Mammary epithelial cell (primary cell): ENCODE measurements at regions of chr20 and their contacts with region 1.

Region 1: GRCh38 chr20:53828682-53829254 is 235.1 kb upstream of the ZNF217 start:
- DNase-seq: peak; percentile 84
- H3K4me3 ChIP-seq: peak overlapping the region; percentile 10 to 40 (median 35)
- H3K27ac ChIP-seq: peak overlapping the region; percentile 100
- H3K4me1 ChIP-seq: peaks cover 36% of the 10 kb centered on the region
- H3K27me3 ChIP-seq: no peaks in the 10 kb centered on the region
- CTCF ChIP-seq: peak in 1 of 2 donors; percentile 14

Region 2: DNA sequence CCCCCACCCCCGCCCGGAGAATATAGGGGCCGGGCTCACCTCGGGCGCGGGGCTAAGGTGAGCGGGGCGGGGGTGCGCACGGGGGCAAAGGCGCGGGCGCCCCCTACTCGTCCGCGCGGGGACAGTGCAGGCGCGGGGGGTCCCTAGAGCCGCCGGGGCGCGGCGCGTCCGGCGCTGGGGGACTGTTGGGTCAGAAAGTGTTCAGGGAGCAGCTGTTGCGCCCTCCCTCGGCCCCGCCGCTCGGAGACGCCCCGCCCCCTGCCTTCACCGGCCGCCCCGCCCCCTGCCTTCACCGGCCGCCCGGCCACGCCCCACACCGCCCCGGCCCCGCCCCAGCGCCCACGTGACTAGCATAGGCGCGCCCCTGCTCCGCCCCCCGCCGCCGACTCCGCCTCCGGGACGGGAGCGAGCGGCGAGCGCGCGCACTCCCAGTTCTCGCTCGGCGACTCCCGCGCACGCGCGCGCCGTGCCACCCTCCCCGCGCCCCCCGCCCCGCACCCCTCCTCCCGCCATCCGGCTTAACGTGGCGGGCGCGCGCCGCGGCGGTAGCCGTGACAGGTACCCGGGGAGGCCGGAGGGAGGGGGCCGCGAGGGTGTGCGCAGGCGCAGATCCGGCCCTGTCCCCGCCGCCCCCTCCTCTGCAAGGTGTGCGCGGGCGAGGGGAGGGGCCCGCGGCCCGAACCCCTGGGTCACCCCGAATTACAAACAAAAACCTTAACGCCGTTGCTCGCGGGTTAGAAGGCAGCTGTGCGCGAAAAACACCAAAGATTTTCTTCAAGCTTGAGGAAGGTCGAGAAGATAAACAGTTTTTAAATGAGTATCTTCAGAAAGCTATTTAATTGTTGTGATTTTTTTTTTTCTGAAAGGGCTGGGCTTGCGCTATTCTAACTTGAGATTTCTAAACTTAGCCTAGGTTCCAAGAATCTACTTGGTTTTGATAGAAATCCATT is 234.4 kb before region 1 on chr20:
- CTCF ChIA-PET with region 1: interaction called, 5 read pairs
- dilution Hi-C with region 1: no loop called
- in situ Hi-C with region 1: no loop called
- intact Hi-C with region 1: loop called (anchors 2 kb)
- DNase-seq: peak; percentile 85
- H3K4me3 ChIP-seq: peak overlapping the region; percentile 67 to 85 (median 83)
- H3K27ac ChIP-seq: peak overlapping the region; percentile 81
- H3K4me1 ChIP-seq: peaks cover 28% of the 10 kb centered on the region
- H3K27me3 ChIP-seq: no peaks in the 10 kb centered on the region
- CTCF ChIP-seq: no peak

Region 3: DNA sequence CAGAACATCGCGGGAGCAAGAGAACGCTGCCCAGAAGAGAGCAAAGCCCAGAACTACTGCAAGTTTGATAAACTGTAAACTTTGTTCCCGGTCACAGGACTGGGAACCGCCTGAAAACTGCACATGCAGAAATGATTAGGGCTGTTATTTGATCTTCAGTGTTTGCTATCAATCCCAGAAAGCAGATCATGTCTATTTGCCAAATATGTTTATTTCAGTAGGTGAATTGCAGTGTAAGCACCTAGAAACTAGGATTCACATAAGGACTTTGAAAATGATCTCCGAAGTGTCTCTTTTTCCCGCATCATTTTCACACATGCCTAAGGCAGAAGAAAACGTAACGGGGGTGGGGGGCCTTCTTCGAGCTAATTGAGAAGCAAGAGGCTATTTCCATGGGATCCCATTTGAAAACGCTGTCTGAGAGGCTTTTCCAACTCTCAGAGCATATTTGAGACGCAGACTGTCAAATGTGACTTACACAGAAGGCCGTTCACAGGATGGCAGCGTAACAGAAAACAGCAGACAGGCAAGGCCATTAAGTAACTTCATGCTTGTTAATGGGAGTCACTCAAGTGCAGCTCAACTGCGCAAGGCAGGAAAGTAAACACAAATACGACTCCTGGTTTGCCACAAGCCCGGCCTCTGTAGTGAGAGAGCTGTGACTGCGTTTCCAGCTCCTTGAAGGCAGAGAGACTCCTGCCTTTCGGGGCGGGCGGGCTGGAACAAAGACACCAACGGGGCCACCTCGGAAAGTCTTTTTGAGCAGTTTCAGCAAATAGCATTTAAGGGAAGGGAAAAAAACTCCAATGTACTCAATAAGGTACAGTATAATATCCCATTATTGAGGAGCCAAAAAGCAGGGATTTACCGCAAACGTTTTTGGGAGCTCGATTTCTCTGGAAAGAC is 90.5 kb before region 1 on chr20:
- CTCF ChIA-PET with region 1: no interaction called
- dilution Hi-C with region 1: no loop called
- in situ Hi-C with region 1: no loop called
- intact Hi-C with region 1: loop called (anchors 5 kb)
- DNase-seq: peak; percentile 78
- H3K4me3 ChIP-seq: no peak overlapping the region
- H3K27ac ChIP-seq: no peak overlapping the region
- H3K4me1 ChIP-seq: peaks cover 29% of the 10 kb centered on the region
- H3K27me3 ChIP-seq: no peaks in the 10 kb centered on the region
- CTCF ChIP-seq: no peak

Region 4: DNA sequence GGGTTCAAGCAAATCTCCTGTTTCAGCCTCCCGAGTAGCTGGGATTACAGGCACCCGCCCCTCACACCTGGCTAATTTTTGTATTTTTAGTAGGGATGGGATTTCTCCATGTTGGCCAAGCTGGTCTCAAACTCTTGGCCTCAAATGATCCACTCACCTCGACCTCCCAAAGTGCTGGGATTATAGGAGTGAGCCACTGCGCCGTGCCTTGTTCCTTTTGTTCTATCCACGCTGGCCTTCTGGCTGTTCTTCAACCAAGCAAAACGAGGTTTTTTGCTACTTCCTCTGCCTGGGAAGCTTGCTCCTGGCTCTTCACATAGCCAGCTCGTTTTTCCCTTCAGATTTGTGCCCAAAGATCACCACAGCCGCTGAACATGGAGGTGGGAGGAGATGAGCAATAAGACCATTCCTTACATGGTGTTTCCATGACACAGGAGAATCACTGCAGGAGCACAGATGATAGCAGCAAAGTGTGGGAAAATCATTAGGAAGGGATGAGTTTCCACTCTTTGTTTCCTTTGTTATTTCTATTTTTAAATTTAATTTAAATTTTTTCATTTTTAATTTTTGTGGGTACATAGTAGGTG is 34.1 kb before region 1 on chr20:
- CTCF ChIA-PET with region 1: no interaction called
- dilution Hi-C with region 1: loop called (anchors 5 kb)
- in situ Hi-C with region 1: no loop called
- intact Hi-C with region 1: loop called (anchors 5 kb)
- DNase-seq: no peak
- H3K4me3 ChIP-seq: no peak overlapping the region
- H3K27ac ChIP-seq: peak overlapping the region; percentile 65
- H3K4me1 ChIP-seq: peaks cover 47% of the 10 kb centered on the region
- H3K27me3 ChIP-seq: no peaks in the 10 kb centered on the region
- CTCF ChIP-seq: no peak

Region 5: DNA sequence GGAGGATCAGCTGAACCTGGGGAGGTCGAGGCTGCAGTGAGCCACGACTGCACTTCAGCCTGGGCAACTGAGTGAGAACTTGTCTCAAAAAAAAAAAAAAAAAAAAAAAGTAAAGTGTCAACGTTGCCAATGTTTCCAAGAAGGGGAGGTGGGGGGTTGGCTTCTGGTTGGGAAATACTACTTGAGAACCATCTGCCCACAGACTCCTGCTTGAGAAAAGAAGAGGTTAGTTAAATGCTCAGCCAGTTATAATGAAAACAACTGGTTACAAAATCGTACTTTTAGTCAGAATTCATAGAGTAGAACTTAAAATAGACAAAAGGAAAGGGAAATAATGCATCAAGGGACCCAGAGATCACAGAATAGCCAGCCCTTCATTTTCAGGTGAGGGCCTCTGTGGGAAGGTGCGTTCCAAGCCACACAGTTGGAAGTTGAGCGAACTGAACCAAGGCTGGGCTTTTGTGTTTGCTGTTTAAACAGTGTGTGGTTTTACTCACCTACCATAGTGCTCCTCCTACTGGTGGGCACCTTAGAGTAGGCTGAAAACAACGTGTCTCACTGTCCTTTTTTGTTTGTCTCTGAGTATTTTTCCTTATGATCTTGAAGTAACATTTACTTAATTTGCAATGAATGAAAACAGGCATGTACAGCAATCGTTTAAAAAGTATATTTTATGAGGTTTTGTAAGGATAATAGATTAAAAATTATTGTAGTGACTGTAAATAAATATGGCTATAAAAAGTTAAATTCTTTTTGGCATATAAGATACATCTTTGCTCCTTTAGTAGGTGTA is 40.9 kb after region 1 on chr20:
- CTCF ChIA-PET with region 1: no interaction called
- dilution Hi-C with region 1: no loop called
- in situ Hi-C with region 1: no loop called
- intact Hi-C with region 1: loop called (anchors 2 kb)
- DNase-seq: peak; percentile 81
- H3K4me3 ChIP-seq: no peak overlapping the region
- H3K27ac ChIP-seq: peak overlapping the region; percentile 74
- H3K4me1 ChIP-seq: peaks cover 56% of the 10 kb centered on the region
- H3K27me3 ChIP-seq: no peaks in the 10 kb centered on the region
- CTCF ChIP-seq: peak; percentile 91 to 94

Region 6: DNA sequence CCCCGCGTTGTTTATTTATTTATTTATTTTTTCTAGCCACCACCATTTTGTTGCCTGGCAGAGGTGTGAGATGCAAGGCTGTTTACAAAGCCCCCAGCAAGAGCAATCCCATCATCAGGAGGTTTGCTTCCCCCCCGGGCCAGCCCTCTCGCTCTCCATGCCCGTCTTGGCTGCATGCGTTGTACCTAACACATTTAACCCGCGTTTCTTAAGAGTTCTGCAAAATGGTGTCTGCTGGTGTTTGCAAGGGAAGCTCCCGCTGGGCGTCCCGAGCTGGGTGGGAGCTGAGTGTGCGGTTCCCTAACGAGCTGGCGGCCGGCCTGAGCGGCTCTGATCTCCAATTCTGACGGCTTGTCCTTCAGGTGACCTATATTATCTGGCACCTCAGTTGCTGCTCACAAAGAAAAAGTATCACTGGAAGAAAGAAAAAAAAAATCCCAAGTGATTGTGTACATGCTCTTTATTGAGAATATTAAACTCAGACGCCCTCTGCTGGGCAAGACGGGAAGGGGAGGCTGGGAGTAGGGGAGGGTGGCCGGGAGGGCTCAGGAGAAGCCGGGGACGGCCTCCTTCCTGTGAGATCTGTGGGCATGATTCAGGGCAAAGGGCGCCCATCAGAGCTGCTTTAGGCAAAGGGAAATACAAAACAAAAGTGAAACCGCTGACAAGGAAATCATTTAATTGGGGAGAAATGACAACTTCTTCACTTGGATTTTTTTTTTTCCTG is 86.8 kb after region 1 on chr20:
- CTCF ChIA-PET with region 1: no interaction called
- dilution Hi-C with region 1: no loop called
- in situ Hi-C with region 1: no loop called
- intact Hi-C with region 1: loop called (anchors 1 kb)
- DNase-seq: peak; percentile 91
- H3K4me3 ChIP-seq: peak overlapping the region; percentile 42 to 50 (median 48)
- H3K27ac ChIP-seq: peak overlapping the region; percentile 76
- H3K4me1 ChIP-seq: peaks cover 46% of the 10 kb centered on the region
- H3K27me3 ChIP-seq: no peaks in the 10 kb centered on the region
- CTCF ChIP-seq: peak; percentile 82 to 86